Activated CD8-positive, alpha-beta T cell treated with anti-CD3 and anti-CD28 coated beads for 36 hours (primary cell): ENCODE measurements at regions of chr13 and their contacts with region 1.

Region 1: DNA sequence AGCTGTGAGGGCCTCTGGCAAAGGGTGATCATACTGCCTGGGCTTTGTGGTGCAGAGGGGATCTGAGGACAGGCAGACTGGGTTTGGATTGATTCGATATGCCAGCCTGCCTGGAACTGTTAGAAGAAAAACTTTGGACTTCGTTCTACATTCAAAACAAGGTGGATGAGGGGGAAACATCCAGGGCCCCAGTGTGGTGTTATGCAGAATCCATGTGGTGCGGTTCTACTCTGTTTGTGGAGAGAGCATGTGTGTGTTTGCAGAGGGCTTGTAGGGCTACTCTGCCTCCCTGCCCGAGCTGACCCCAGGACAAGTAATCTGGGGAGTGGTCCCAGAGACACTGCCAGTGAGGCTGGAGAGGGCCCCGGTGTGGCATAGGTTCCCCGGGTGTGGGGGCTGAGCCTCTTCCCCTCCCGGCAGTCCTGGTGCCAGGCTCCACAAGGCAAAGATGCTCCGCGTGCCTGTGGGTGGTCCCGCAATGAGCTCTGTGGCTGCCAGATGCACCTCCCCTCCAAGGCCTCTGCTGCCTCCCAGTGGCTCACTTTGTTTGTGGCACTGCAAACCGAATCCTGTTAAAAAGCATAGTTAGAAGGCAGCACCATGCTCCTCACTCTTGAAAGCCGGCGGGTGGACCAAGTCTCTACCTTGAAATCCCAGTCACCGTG is 22.3 kb upstream of the TFDP1 start:
- DNase-seq: peak; percentile 80
- ATAC-seq: peak; percentile 96
- H3K4me3 Mint-ChIP-seq: no peak overlapping the region
- H3K27ac Mint-ChIP-seq: no peak overlapping the region
- H3K4me1 Mint-ChIP-seq: no peaks in the 10 kb centered on the region
- H3K27me3 Mint-ChIP-seq: peaks cover 2% of the 10 kb centered on the region
- CTCF ChIP-seq: peak; percentile 73

Region 2: DNA sequence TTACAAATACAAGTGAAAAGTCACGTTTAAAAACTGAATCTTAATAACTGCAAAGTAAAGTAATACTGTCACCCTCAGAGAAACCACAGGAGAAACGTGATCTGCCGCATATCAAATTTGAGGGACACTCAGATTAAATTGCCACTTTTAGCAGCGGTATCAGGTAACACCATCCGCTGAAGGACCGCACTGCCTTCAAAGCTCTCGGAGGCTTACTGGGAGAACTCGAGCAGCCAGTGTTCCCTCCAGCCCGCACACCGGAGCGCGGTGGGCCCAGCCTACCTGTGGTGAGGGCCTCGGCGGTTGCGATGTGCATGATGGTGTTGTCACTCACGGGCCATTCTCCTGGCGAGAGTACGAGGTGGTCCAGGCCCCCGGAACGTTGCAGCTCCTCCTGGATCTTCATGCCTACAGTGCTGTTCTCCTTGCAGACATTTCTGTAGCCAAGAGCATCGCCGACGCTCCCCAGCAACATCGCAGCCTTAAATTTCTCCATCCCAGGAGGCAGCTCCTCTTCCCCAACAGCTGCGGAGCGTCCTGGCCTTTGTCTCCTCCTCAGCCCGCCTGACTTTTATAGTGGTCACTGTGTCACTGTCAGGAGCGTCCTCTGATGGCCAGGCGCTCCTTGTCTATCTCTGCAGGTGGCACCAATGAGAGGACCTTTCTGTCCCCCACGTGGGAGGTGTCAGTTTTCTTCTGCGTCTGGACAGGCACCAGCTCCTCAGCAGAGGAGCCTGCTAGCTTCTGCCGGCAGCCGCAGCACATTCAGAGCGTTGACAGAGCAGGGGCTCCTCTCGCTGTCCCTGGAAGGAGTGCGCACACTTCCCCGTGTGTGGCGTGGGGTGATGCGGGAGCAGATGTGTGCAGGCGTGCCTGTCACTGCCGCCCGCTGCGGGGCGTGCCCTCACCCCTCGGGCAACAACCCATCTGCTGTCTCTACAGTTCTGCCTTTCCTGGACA is 109.0 kb before region 1 on chr13 and contains the start of gene ADPRHL1:
- CTCF ChIA-PET with region 1: interaction called, 28 read pairs
- POLR2A ChIA-PET with region 1: no interaction called
- intact Hi-C with region 1: loop called (anchors 5 kb)
- DNase-seq: no peak
- ATAC-seq: no peak
- H3K4me3 Mint-ChIP-seq: no peak within 1 kb of the TSS
- H3K27ac Mint-ChIP-seq: no peak within 1 kb of the TSS
- H3K4me1 Mint-ChIP-seq: no peaks in the 10 kb centered on the region
- H3K27me3 Mint-ChIP-seq: no peaks in the 10 kb centered on the region
- CTCF ChIP-seq: no peak
- total RNA-seq, gene ADPRHL1: 0.23 to 0.36 TPM

Region 3: DNA sequence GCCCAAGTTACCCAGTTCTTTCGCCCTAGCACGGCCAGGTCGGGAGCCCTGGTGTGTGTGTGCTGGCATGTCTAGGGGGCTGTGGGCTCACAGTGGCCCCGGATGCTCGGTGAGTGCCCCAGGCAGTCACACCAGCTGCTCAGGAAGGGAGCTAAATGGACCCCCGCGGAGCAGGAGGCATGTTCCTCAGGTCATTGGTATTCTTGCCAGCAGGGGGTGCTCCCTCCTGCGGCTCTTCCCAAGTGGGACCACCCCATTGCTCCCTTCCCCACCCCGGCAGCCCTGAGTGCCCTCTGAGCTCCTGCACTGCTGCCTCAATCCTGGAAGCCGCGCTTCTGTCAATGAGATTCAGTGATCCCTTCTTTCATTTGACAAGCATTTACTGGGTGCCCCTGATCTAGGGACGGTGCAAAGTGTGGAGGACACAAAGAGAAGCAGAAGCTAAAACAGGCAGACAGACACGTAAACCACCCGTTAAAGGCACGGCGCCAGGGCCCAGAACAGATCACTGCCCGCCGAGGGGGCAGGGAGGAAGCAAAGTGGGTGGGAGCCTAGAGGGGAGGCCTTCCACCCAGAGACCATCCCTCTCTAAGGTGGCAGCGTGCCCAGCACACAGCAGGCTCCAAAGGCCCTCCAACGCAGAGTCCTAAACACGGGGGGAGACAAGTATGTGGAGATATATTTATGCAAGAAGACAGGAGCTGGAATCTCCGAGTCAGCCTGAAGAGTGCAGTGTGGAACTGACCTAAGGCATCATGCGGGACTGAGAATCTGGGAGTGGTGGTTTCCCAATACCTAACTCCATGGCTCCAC is 103.8 kb before region 1 on chr13:
- CTCF ChIA-PET with region 1: interaction called, 28 read pairs
- POLR2A ChIA-PET with region 1: no interaction called
- intact Hi-C with region 1: loop called (anchors 5 kb)
- DNase-seq: peak; percentile 30
- ATAC-seq: peak; percentile 60
- H3K4me3 Mint-ChIP-seq: no peak overlapping the region
- H3K27ac Mint-ChIP-seq: no peak overlapping the region
- H3K4me1 Mint-ChIP-seq: no peaks in the 10 kb centered on the region
- H3K27me3 Mint-ChIP-seq: no peaks in the 10 kb centered on the region
- CTCF ChIP-seq: peak; percentile 58

Region 4: GRCh38 chr13:113493315-113493951 is 68.8 kb before region 1 on chr13:
- CTCF ChIA-PET with region 1: interaction called, 13 read pairs
- POLR2A ChIA-PET with region 1: interaction called, 3 read pairs
- intact Hi-C with region 1: no loop called
- DNase-seq: no peak
- ATAC-seq: peak; percentile 38
- H3K4me3 Mint-ChIP-seq: peak overlapping the region; percentile 7
- H3K27ac Mint-ChIP-seq: peak overlapping the region; percentile 48
- H3K4me1 Mint-ChIP-seq: peaks cover 49% of the 10 kb centered on the region
- H3K27me3 Mint-ChIP-seq: no peaks in the 10 kb centered on the region
- CTCF ChIP-seq: no peak

Region 5: DNA sequence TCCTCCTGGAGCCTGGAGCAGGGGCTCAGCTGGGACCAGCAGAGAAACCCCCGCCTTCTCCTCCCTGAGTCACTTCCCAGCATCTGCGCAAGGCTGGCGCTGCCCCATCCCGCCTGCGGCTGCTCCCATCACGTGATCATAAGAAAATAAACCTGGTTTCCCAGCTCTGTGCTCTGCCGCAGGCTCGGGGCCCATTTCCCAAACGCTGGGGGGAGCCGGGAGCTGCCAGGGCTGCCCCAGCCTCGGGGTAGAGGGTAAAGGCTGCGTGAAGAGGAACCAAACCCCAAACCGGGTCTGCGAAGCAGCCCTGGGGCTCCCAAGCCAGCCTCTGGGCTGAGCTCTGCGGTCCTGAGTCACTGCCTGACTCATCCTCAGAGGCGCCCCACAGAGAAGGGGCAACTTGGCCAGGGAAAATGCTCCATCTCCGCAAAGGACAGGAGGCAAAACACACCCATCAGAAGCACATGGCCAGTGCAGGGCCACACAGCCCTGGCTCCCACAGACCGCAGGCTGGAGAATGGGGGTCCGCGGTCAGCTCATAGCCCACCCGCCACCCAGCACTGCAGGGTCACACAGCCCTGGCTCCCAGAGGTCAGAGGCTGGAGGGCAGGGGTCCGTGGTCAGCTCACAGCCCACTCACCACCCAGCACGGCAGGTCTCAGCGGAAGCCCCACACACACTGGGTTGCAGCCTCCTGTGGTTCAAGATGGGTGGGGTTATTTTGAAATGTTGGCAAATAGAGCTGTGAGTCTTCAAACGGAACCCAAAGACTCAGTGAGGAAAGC is 503.1 kb after region 1 on chr13:
- CTCF ChIA-PET with region 1: no interaction called
- POLR2A ChIA-PET with region 1: no interaction called
- intact Hi-C with region 1: no loop called
- DNase-seq: peak; percentile 90
- ATAC-seq: peak; percentile 75
- H3K4me3 Mint-ChIP-seq: peak overlapping the region; percentile 66
- H3K27ac Mint-ChIP-seq: peak overlapping the region; percentile 94
- H3K4me1 Mint-ChIP-seq: peaks cover 66% of the 10 kb centered on the region
- H3K27me3 Mint-ChIP-seq: no peaks in the 10 kb centered on the region
- CTCF ChIP-seq: no peak